ENCODE measurements at regions of chr19 and their contacts with region 1.

Region 1: DNA sequence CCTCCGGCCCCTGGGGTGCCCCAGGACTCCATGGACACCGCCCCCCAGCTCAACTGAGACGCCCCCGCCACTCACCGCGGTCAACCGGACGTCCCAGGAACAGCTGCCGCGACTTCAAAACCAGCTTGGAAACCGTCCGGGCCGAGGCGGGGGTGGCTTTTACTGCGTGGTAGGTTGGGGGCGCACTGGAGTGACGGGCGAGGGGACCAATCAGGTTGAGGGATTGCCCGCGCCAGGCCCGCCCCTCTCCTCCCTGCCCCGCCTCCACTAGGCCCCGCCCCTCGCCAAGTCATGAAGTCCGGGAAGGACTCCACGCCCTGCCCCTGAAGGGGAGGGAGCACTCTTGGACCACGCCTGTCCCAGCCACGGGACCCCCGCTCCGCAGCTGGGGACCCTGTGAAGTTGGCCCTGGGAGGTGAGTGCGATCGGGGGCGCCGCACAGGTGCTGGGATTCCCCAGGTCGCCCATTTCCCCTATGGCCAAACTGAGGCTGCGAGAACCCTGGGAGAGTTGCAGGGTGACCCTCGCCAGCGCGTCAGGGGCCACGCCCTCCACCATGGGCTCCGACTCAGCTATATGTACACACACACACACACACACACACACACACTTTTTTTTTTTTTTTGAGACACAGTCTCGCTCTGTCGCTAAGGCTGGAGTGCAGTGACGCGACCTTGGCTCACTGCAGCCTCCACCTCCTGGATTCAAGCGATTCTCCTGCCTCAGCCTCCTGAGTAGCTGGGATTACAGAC is at the start of gene PLIN3:
- DNase-seq: peak; percentile 51 to 95 (median 92)
- H3K4me3 ChIP-seq: peak within 1 kb of the TSS; percentile 51 to 88 (median 76)
- H3K27ac ChIP-seq: peak within 1 kb of the TSS; percentile 11 to 94 (median 84)
- H3K27me3 ChIP-seq: peaks cover 0 to 8% (median 0%) of the 10 kb centered on the region in 45 donors
- CTCF ChIP-seq: peak in 9 of 56 donors; percentile 6 to 37 (median 12)
- total RNA-seq, gene PLIN3: 10.5 to 104 (median 28.0) TPM

Region 2: DNA sequence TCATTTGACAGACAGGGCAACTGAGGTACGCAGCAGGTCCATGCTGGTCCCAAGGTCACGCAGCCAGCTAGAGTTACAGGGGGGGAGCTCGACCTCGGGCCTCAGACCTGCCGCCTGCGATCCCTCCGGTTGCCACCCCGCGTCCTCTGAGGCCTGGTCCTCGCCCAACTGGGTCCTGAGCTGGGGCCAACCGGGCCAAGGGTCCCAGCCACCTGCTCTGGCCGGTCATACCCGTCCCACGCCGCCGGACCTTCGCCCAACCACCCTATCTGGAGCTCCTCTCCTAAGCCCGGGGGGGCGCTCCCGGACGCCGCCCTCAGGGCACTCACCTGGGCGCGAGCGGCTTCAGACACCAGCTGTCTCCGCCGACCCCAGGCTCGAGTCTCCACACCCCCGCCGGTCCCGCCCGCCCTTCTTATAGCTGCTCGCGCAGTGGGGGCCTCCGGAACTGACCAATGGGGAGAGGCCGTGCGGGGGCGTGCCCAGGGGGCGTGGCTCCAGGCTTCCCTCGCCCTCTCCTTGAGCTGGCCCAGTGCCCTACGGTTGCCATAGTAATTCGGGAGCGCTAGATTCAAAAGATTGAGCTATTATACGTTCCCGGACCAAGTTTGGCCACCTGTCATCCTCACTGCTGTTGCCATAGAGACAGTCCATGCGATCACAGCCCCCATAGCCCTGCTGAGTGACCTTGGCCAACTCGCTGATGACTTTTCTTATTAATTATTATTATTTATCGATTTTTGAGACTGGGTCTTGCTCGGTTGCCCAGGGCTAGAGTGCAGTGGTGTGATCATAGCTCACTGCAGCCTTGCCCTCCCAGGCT is 332.7 kb before region 1 on chr19 and contains the start of gene PLIN5:
- intact Hi-C with region 1: no loop called
- DNase-seq: peak; percentile 53 to 88 (median 76)
- H3K4me3 ChIP-seq: peak within 1 kb of the TSS; percentile 16 to 65 (median 45)
- H3K27ac ChIP-seq: peak within 1 kb of the TSS in 24 of 59 donors; percentile 5 to 64 (median 39)
- H3K27me3 ChIP-seq: no peaks in the 10 kb centered on the region
- CTCF ChIP-seq: no peak
- total RNA-seq, gene PLIN5: 5.4 to 56.3 (median 15.4) TPM

Region 3: DNA sequence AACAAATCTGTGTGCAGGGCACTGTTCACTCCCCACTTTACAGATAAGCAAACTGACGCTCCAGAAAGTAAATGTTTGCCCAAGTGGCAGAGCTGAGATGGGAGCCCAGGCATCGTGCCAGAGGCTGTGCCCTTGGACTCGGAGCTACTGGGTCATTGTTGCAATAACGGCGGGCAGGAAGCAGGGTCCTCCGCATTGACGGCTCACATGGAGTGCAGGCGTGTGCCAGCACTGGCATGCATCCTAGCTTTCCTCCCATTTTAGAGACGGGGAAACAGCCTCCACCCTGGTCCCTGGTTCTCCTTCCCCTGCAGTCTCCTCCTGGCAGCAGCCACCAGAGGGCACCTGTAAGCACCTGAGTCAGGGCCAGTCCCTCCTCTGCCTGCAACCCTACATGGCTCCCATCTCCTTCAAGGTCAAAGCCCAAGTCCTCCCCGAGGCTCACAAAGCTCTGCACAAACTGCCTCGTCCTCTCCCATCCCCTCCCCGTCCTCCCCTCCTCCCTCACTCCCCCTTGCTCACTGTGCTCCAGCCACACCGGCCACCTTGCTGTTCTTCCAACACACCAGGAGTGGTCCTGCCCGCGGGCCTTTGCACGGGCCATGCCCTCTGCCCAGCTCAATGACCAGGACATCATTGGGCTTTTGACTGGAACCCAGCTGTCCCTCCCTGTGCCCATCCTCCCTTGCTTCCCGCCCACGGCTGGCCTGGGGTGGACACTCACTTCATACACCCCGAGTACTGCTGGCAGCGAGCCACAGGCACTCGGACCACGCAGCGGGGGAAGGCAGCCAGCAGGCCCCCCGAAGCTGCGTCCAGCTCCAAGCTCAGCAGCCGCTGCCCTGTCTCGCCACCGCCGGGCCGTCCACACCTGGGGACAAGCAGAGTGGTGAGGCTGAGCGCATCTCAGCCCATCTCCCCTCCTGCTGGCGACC is 320.1 kb before region 1 on chr19:
- intact Hi-C with region 1: no loop called
- DNase-seq: no peak
- H3K4me3 ChIP-seq: no peak overlapping the region
- H3K27ac ChIP-seq: peak overlapping the region in 1 of 59 donors; percentile 21
- H3K27me3 ChIP-seq: no peaks in the 10 kb centered on the region
- CTCF ChIP-seq: peak in 21 of 56 donors; percentile 6 to 38 (median 19)

Region 4: GRCh38 chr19:4776436-4777205 is 91.1 kb before region 1 on chr19:
- intact Hi-C with region 1: no loop called
- DNase-seq: no peak
- H3K4me3 ChIP-seq: no peak overlapping the region
- H3K27ac ChIP-seq: no peak overlapping the region
- H3K27me3 ChIP-seq: no peaks in the 10 kb centered on the region
- CTCF ChIP-seq: no peak

Region 5: GRCh38 chr19:4909897-4910593 is 42.3 kb after region 1 on chr19:
- intact Hi-C with region 1: loop called in 1 of 2 experiments (anchors 1 kb)
- DNase-seq: peak; percentile 88 to 95 (median 92)
- H3K4me3 ChIP-seq: peak overlapping the region; percentile 41 to 83 (median 71)
- H3K27ac ChIP-seq: peak overlapping the region in 50 of 59 donors; percentile 24 to 89 (median 74)
- H3K27me3 ChIP-seq: peaks cover 0 to 15% (median 0%) of the 10 kb centered on the region in 45 donors
- CTCF ChIP-seq: peak in 2 of 56 donors; percentile 4 to 28

Region 6: DNA sequence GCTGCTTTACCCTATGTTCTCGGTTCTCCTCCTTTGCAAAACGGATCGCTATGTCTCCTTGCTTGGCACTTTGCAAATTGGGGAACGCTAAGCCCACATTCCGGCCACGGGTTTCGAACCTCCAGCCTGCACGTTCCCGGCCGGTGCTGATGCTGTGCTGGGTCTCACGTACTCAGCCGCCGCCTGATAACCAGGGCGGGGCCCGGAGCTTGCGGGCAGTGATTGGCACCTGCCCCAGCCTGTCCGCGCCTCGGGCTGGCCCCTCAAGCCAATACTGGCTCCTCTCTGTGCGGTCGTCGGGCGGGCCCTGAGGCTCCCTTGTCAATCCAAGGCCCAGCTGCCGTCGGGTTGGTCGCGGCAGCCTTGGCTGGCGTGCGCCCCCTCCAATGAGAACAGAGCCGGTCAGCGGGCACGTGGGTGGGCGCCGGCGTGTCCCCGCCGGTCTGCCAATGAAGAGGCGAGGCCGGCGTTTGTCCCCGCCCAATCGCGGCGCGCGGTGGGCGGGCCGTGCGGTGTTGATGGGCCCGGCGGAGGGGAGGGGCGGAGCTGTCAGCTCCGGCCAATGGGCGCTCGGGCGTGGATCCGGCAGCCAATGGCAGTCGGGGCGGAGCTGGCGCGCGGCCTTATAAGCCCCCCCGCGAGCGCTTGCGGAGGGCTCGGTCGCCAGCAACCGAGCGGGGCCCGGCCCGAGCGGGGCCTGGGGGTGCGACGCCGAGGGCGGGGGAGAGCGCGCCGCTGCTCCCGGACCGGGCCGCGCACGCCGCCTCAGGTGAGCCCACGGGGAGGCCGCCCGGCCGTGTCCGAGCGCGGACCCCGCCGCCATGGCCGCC is 101.0 kb after region 1 on chr19 and contains the start of gene KDM4B:
- intact Hi-C with region 1: loop called in 1 of 2 experiments (anchors 5 kb)
- DNase-seq: peak; percentile 98 to 100 (median 99)
- H3K4me3 ChIP-seq: peak within 1 kb of the TSS; percentile 49 to 85 (median 72)
- H3K27ac ChIP-seq: peak within 1 kb of the TSS in 51 of 59 donors; percentile 30 to 89 (median 77)
- H3K27me3 ChIP-seq: no peaks in the 10 kb centered on the region
- CTCF ChIP-seq: peak in 9 of 56 donors; percentile 4 to 43 (median 16)
- total RNA-seq, gene KDM4B: 35.7 to 91.2 (median 55.2) TPM

Region 7: GRCh38 chr19:5216141-5216847 is 348.6 kb after region 1 on chr19:
- intact Hi-C with region 1: no loop called
- DNase-seq: no peak
- H3K4me3 ChIP-seq: no peak overlapping the region
- H3K27ac ChIP-seq: no peak overlapping the region
- H3K27me3 ChIP-seq: no peaks in the 10 kb centered on the region
- CTCF ChIP-seq: no peak

Measured in dorsolateral prefrontal cortex (tissue), 120 donors.